ENCODE measurements at regions of chr5 and their contacts with region 1.

Region 1: DNA sequence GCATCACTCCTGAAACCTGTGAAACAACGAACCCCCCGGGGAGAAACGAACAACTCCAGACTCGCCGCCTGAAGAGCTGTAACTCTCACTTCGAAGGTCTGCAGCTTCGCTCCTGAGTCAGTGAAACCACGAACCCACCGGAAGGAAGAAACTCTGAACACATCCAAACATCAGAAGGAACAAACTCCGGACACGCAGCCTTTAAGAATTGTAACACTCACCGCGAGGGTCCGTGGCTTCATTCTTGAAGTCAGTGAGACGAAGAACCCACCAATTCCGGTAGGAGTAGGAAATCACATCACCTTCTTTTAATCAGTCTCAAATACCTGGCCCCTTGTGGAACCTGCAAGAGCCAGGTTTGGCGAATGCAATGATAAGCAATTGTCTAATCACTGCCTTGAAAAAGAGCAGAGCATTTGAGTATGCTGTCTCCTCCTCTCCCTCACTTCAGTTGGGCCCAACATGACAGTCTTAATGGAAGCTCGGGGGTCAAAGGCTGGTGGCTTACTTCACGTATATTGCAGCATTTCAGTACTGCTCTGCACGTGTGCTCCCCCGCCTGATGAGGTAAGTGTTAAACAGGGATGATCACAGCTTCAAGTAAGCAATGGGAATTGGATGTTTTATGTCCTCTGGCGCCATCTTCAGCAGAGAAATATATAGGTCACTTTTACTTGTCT is 473 bp downstream of the IRGM start:
- DNase-seq: peak; percentile 57
- H3K4me3 Mint-ChIP-seq: peak overlapping the region; percentile 73
- H3K27ac Mint-ChIP-seq: peak overlapping the region; percentile 67
- H3K4me1 Mint-ChIP-seq: peaks cover 18% of the 10 kb centered on the region
- H3K27me3 Mint-ChIP-seq: peaks cover 2% of the 10 kb centered on the region

Region 2: GRCh38 chr5:150458819-150459557 is 387.8 kb before region 1 on chr5:
- intact Hi-C with region 1: loop called (anchors 2 kb)
- DNase-seq: peak; percentile 78
- H3K4me3 Mint-ChIP-seq: peak overlapping the region; percentile 19
- H3K27ac Mint-ChIP-seq: no peak overlapping the region
- H3K4me1 Mint-ChIP-seq: peaks cover 16% of the 10 kb centered on the region
- H3K27me3 Mint-ChIP-seq: no peaks in the 10 kb centered on the region

Region 3: DNA sequence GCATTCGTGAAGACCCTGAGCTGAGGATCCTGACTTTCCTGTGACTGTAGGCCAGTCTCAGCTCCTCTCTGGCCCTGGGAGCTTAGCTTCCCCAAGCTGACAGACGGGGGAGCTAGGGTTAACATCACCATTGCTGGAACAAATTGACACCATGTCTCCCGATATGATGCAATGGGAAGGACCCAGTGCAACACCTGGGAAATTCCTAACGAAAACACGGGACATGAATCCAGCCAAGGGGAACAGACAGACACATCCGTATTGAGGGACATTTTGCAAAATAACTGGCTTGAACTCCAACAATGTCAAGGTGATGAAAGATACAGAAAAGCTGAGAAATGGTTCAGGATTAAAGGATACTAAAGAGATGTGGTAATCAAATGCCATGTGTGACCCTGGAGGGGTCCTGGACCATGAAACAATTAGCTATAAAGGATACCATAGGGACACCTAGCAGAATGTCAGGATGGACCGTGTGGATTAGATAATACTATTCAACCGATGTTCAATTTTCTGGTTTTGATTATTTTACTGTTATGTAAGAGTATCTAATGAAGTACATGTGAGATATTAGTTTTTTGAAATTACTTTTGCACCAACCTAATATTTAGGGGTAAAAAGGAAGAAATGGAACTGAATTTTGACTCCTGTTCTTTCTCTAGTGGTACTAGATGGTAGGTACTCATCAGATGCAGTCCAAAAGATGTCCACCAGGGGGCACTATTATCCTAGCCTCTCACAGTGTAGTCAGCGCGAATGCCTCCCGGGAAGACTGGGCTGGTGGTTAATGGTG is 286.2 kb before region 1 on chr5:
- intact Hi-C with region 1: loop called (anchors 1 kb)
- DNase-seq: peak; percentile 65
- H3K4me3 Mint-ChIP-seq: no peak overlapping the region
- H3K27ac Mint-ChIP-seq: no peak overlapping the region
- H3K4me1 Mint-ChIP-seq: no peaks in the 10 kb centered on the region
- H3K27me3 Mint-ChIP-seq: no peaks in the 10 kb centered on the region

Region 4: GRCh38 chr5:150656191-150657132 is 190.3 kb before region 1 on chr5:
- intact Hi-C with region 1: loop called (anchors 2 kb)
- DNase-seq: peak; percentile 77
- H3K4me3 Mint-ChIP-seq: peak overlapping the region; percentile 77
- H3K27ac Mint-ChIP-seq: no peak overlapping the region
- H3K4me1 Mint-ChIP-seq: peaks cover 6% of the 10 kb centered on the region
- H3K27me3 Mint-ChIP-seq: peaks cover 12% of the 10 kb centered on the region

Region 5: DNA sequence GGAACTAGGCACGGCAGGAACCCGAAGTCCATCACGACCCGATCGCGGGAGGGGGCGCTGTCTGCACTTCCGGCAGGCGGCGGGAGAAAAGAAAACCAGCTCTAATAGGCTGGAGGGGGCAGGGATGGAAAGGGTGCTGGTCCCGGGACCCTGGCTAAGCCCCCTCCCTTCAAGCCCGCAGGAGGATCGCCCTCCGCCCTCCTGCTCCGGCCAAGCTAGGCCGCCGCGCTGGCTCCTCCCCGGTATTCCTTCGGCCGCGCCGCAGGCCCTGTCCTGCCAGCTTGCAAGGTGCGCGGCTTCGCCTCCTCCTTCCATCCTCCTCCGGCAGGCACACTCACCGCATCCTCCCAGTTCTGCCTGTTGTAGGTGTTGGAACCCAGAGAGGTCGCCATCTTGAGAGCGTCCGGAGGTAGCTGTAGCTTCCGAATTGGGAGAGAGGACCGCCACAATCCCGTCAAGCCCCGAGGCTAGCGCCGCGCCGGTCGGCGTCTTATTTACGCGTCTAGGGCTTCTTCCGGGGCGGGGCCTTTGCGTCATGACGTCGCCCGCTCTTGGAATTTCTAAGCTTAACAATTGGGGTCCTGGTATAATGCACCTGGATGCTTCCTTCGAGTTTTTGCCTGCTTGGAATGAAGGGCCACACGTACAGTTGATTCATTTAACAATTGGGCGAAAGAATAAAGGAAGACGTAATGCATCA is 146.1 kb before region 1 on chr5 and contains the start of gene RBM22:
- intact Hi-C with region 1: loop called (anchors 1 kb)
- DNase-seq: peak; percentile 86
- H3K4me3 Mint-ChIP-seq: no peak within 1 kb of the TSS
- H3K27ac Mint-ChIP-seq: no peak within 1 kb of the TSS
- H3K4me1 Mint-ChIP-seq: peaks cover 6% of the 10 kb centered on the region
- H3K27me3 Mint-ChIP-seq: no peaks in the 10 kb centered on the region
- total RNA-seq, gene RBM22: 65.2 and 71.7 TPM in 2 replicates

Region 6: DNA sequence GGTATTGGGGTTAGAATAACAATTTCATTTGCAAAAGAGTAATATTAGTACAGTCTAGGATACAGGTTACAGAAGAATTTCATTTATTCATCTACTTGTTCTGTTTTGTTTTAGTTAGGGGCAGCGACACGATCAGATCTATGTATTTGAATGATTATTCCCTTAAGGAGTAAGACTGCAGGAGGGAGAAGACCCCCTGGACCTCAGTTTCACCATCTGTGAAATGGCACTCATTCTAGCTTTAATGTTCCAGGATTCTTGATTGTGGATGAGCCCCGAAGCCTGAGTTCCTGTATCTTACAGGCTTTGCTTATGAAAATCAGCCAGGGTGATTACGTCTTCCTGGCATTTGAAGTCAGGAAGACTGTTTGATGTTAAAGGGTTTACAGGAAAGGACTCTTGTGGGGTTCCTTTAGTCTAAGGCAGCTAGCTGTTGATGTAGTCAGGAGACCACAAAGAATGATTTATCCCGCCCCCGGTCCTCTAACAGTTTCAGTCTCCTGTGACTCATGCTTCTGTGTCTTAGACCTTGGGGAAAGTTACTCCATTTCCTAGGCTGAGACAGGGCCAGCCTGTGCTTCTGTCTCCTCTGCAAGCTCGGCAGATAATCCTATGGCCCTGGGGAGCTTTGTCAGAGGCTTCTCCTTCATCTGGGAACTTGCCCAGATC is 56.7 kb before region 1 on chr5:
- intact Hi-C with region 1: loop called (anchors 2 kb)
- DNase-seq: peak; percentile 49
- H3K4me3 Mint-ChIP-seq: peak overlapping the region; percentile 49
- H3K27ac Mint-ChIP-seq: peak overlapping the region; percentile 87
- H3K4me1 Mint-ChIP-seq: peaks cover 44% of the 10 kb centered on the region
- H3K27me3 Mint-ChIP-seq: no peaks in the 10 kb centered on the region

Region 7: DNA sequence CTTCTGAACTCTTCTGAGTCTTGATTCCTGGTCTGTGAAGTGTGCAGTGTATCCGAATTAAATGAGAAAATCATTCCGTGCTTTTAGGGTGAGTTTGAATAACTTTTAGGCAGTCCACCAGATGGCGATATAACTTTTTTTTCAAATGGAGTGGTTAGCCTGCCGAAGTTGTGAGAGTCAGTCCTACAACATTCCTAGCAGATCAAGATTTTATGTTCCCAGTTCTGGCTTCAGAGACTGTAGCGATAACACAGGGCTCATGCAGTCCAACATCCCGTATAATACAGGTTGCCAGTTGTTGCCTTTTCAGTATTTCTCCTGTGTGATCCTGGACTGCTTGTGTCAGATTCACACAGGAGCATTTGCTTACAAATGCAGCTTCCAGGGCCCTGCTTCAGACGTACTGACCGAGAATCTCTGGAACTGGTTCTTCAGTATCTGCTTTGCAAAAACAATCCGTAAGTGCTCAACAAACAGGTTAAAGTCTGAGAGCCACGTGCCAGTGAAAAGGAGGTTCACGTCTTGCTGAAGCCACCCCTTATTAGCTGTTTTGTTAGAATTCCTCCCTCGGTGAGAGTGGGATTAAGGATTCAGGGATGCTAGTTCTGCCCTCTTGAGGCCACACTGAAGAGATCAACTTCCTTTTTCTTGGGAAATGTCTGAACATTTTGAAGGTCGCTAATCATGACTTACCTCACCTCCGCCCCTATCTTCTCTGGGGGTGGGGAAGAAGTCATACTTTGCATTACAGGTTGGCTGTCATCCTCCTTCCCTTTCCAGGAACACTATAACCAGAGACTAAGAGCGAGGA is 45.5 kb before region 1 on chr5:
- intact Hi-C with region 1: loop called (anchors 1 kb)
- DNase-seq: no peak
- H3K4me3 Mint-ChIP-seq: no peak overlapping the region
- H3K27ac Mint-ChIP-seq: no peak overlapping the region
- H3K4me1 Mint-ChIP-seq: peaks cover 13% of the 10 kb centered on the region
- H3K27me3 Mint-ChIP-seq: peaks cover 13% of the 10 kb centered on the region

Region 8: GRCh38 chr5:150829744-150830143 is 17.1 kb before region 1 on chr5:
- intact Hi-C with region 1: no loop called
- DNase-seq: no peak
- H3K4me3 Mint-ChIP-seq: no peak overlapping the region
- H3K27ac Mint-ChIP-seq: no peak overlapping the region
- H3K4me1 Mint-ChIP-seq: no peaks in the 10 kb centered on the region
- H3K27me3 Mint-ChIP-seq: peaks cover 5% of the 10 kb centered on the region